Left cardiac atrium (tissue), 4 donors: ENCODE measurements at regions of chr1 and their contacts with region 1.

Region 1: DNA sequence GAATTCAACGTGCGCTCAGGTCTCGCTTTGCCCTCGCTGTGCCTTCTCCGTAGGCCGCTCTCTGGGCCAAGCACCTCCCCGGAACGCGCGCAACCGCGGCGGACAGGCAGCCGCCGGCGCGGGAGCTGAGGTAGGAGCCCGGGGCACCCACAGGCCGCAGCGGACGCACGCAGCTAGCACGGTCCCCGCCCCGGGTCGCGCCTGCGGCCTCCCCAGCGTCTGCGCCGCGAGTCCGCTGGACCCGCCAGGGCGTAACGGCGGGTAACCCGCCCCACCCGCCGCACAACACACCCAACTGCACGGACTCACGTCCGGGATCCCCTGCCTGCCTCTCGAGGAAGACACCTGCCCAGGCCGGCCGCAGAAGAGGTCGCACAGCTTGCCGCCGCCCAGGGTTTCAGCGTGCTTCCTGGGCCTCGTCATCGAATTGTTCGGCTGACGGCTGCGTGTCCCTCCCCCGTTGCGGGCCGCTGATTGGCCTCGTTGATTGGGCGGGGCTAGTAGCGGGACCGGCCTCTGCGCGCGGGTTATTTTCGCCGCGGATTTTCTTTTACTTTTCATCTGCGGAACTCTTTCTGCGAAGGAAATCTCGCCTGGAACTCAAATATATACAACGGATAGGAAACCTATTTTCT is at the start of gene CLCC1:
- DNase-seq: peak; percentile 94
- ATAC-seq: peak; percentile 98 to 99
- total RNA-seq, gene CLCC1: 23.5 to 28.3 TPM

Region 2: GRCh38 chr1:109011335-109011734 is 48.2 kb after region 1 on chr1:
- intact Hi-C with region 1: no loop called
- DNase-seq: no peak
- ATAC-seq: no peak

Region 3: GRCh38 chr1:109112652-109113285 is 149.6 kb after region 1 on chr1:
- intact Hi-C with region 1: loop called in 1 of 2 experiments (anchors 10 kb)
- DNase-seq: peak; percentile 95
- ATAC-seq: peak; percentile 97